A673 (cell line): ENCODE measurements at regions of chr15 and their contacts with region 1.

Region 1: GRCh38 chr15:55108858-55109518 is 87.8 kb downstream of the RSL24D1 start:
- DNase-seq: peak; percentile 67
- H3K4me3 ChIP-seq: no peak overlapping the region
- H3K27ac ChIP-seq: no peak overlapping the region
- H3K4me1 ChIP-seq: no peaks in the 10 kb centered on the region
- H3K27me3 ChIP-seq: no peaks in the 10 kb centered on the region
- CTCF ChIP-seq: peak; percentile 91

Region 2: DNA sequence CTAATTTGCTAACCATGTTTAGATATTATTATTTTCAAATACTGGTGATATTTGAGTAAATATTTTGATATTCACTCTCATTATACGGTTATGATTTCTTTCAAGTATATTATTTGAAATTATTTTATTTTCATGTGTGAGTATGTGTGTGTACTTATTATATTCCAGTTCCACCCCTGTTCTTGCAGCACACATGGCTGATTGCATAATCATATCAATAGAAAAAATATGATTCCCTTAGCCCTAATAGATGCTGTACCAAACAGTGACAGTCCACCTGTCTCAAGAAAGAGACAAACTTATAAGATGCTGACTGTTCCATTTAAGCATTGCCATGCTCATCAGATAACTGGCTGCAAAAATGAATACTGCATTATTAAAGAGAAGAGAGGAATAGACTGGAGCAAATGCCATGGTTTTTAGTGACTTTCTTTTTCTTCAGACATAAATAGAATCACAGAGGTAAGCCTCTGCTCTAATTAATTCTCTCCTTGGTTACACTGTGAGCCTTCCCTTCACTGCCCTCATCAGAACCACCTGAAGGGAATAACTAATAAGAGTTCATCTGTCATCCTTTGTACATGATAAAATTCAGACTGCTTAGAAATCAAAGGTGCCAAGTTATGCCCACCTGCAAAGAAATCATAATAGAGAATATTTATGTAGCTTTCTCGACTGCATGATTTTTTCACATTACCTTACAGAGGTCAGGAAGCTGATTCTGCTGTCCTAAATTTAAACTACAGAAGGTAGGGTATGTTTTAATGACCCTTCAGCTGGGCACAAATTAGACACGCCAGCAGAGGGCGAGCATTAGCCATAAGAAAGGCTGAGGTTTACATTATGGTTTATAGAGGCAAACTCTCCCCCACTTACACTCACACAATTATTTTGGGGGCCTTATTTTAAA is 1146.4 kb before region 1 on chr15:
- CTCF ChIA-PET with region 1: interaction called, 7 read pairs
- POLR2A ChIA-PET with region 1: no interaction called
- intact Hi-C with region 1: loop called (anchors 10 kb)
- DNase-seq: peak; percentile 17
- H3K4me3 ChIP-seq: no peak overlapping the region
- H3K27ac ChIP-seq: no peak overlapping the region
- H3K4me1 ChIP-seq: no peaks in the 10 kb centered on the region
- H3K27me3 ChIP-seq: no peaks in the 10 kb centered on the region
- CTCF ChIP-seq: peak; percentile 59

Region 3: GRCh38 chr15:54082836-54083492 is 1026.0 kb before region 1 on chr15:
- CTCF ChIA-PET with region 1: no interaction called
- POLR2A ChIA-PET with region 1: no interaction called
- intact Hi-C with region 1: loop called (anchors 10 kb)
- DNase-seq: peak; percentile 37
- H3K4me3 ChIP-seq: no peak overlapping the region
- H3K27ac ChIP-seq: no peak overlapping the region
- H3K4me1 ChIP-seq: no peaks in the 10 kb centered on the region
- H3K27me3 ChIP-seq: no peaks in the 10 kb centered on the region
- CTCF ChIP-seq: peak; percentile 75

Region 4: DNA sequence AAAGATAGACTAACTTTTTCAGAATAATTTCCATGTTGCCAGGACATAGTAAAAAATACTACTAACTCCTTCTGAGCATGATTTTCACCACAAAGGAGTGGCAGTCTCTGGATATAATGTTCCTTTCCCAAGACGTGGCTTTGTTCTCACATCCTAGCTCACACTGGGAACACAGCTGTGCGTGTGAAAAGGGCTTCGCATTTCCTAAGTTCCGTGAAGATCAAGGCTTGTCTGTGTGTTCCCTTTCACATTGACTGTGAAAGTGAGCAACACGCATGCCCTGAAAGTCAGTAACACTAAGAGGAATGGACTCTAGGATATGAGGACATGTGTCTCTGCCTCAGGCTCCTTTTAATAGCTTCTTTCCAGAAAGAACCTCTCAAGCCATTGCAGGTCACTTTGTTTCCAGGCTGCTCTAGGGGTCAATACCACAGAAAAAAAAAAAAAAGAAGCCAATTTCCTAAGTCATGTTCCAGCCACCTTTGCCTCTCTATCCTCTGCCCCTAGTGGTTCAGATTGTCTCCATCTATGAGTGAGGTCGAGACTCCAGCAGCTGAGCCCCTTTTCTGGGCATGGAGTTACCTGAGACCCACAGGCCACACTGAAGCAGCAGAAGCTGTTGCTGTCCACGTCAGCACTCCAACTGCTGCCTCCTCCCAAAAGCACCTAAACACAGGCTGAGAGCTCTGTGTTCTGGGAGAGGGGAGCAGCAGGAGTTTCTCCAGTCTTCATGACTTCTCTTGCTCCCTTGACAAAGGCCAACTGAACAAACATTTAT is 268.2 kb before region 1 on chr15:
- CTCF ChIA-PET with region 1: no interaction called
- POLR2A ChIA-PET with region 1: no interaction called
- intact Hi-C with region 1: no loop called
- DNase-seq: no peak
- H3K4me3 ChIP-seq: no peak overlapping the region
- H3K27ac ChIP-seq: no peak overlapping the region
- H3K4me1 ChIP-seq: no peaks in the 10 kb centered on the region
- H3K27me3 ChIP-seq: no peaks in the 10 kb centered on the region
- CTCF ChIP-seq: no peak

Region 5: DNA sequence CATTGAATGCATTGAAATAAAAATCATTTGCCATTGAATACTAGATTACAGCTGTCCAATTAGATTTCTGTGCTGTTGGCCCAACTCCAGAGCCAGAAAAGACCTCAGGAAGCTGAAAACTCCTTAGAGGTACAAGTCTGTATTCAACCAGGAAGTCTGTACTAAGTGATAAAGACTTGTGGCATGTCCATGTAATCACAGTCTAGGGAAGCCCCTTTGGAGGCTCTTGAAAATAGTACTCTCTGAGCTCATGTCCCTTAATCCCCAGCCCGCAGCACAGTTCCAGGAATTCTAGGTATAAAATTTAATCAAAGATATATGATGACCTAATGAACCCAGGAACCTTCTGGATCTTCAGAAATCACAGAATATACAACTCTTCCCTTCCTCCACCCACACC is 191.7 kb before region 1 on chr15:
- CTCF ChIA-PET with region 1: no interaction called
- POLR2A ChIA-PET with region 1: no interaction called
- intact Hi-C with region 1: no loop called
- DNase-seq: no peak
- H3K4me3 ChIP-seq: no peak overlapping the region
- H3K27ac ChIP-seq: no peak overlapping the region
- H3K4me1 ChIP-seq: no peaks in the 10 kb centered on the region
- H3K27me3 ChIP-seq: no peaks in the 10 kb centered on the region
- CTCF ChIP-seq: no peak

Region 6: DNA sequence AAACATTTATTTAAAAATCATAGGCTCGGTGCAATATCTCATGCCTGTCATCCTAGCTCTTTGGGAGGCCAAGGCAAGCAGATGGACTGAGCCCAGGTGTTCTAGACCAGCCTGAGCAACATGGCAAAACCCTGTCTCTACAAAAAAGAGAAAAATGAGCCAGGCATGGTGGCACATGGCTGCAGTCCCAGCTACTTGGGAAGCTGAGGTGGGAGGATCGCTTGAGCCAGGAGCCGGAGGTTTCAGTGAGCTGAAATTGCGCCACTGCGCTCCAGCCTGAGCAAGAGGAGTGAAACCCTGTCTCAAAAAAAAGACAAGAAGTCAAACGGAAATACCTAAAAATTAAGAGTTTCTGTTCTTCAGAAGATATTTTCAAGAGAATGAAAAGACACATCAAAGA is 34.6 kb before region 1 on chr15:
- CTCF ChIA-PET with region 1: interaction called, 10 read pairs
- POLR2A ChIA-PET with region 1: no interaction called
- intact Hi-C with region 1: no loop called
- DNase-seq: no peak
- H3K4me3 ChIP-seq: no peak overlapping the region
- H3K27ac ChIP-seq: no peak overlapping the region
- H3K4me1 ChIP-seq: no peaks in the 10 kb centered on the region
- H3K27me3 ChIP-seq: no peaks in the 10 kb centered on the region
- CTCF ChIP-seq: no peak